ENCODE measurements at regions of chr2 and their contacts with region 1.

Region 1: DNA sequence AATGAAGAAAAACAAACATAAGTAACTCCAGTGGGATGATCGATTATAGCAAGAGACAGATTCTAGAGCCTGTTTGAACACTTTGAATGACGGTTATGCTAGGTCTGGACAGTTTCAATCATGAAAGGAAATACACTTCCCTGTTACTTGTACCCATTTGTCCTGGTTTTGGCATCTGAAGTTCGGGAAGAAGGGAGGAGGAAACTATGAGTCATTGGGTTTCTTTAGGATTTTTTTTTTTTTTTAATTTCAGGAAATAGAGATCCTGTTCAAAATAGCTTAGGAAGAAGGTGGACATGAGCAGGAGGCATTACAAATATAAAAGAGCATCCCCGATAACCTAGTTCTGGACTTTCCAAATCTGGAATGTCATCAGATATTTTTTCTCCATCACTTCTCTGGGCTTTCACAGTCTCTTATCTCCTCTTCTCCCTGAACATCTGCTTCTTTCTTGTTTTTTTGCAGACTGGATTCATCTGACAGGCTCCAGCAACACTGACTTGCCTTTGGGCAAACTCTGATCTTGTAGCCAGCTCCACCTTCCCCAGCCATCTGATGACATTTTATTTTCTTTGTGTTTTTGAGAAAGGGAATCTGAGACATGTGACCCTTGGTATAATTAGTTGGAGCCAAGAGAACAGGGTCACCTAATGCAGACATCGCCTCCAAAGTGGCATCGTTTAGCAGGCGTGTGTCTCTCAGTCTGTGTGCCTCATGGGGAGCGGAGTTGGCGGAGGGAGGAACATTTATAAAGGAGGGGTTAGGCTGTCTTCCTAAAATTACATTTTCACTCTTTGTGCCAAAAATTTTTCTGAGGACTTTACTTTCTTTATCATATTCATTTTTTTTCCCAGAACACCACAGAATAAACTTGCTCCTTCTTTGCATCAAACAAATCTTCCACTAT is 195.3 kb upstream of the EPHA4 start:
- DNase-seq: no peak
- H3K4me3 Mint-ChIP-seq: no peak overlapping the region
- H3K27ac Mint-ChIP-seq: no peak overlapping the region
- H3K4me1 Mint-ChIP-seq: no peaks in the 10 kb centered on the region
- H3K27me3 Mint-ChIP-seq: no peaks in the 10 kb centered on the region
- CTCF ChIP-seq: no peak

Region 2: GRCh38 chr2:220619558-220620217 is 1147.7 kb before region 1 on chr2:
- CTCF ChIA-PET with region 1: interaction called, 10 read pairs
- intact Hi-C with region 1: no loop called
- DNase-seq: peak; percentile 72
- H3K4me3 Mint-ChIP-seq: peak overlapping the region; percentile 6
- H3K27ac Mint-ChIP-seq: peak overlapping the region; percentile 93
- H3K4me1 Mint-ChIP-seq: peaks cover 37% of the 10 kb centered on the region
- H3K27me3 Mint-ChIP-seq: no peaks in the 10 kb centered on the region
- CTCF ChIP-seq: no peak

Region 3: GRCh38 chr2:221802089-221802488 is 34.7 kb after region 1 on chr2:
- CTCF ChIA-PET with region 1: no interaction called
- intact Hi-C with region 1: no loop called
- DNase-seq: no peak
- H3K4me3 Mint-ChIP-seq: no peak overlapping the region
- H3K27ac Mint-ChIP-seq: no peak overlapping the region
- H3K4me1 Mint-ChIP-seq: no peaks in the 10 kb centered on the region
- H3K27me3 Mint-ChIP-seq: no peaks in the 10 kb centered on the region
- CTCF ChIP-seq: no peak

Region 4: DNA sequence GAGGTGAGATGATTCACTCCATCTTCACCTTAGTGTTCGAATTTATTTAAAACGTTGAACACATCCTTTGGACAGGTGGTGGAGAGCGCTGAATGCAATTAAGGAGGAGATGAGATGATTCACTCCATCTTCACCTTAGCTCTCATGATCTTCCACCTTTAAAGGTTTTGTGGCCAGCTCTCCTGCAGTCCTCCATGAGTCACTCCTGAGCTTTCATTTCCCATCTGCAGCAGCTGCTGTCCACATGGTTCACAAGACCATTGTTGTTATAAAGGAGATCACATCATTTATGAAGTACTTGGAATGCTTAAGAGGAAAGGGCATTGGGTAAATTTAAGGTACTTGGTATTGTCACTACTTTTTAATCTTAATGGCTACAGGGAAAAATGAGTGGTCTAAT is 233.0 kb after region 1 on chr2:
- CTCF ChIA-PET with region 1: no interaction called
- intact Hi-C with region 1: no loop called
- DNase-seq: peak; percentile 4
- H3K4me3 Mint-ChIP-seq: no peak overlapping the region
- H3K27ac Mint-ChIP-seq: no peak overlapping the region
- H3K4me1 Mint-ChIP-seq: peaks cover 18% of the 10 kb centered on the region
- H3K27me3 Mint-ChIP-seq: peaks cover 20% of the 10 kb centered on the region
- CTCF ChIP-seq: no peak